ENCODE measurements at regions of chr1 and their contacts with region 1.

Region 1: DNA sequence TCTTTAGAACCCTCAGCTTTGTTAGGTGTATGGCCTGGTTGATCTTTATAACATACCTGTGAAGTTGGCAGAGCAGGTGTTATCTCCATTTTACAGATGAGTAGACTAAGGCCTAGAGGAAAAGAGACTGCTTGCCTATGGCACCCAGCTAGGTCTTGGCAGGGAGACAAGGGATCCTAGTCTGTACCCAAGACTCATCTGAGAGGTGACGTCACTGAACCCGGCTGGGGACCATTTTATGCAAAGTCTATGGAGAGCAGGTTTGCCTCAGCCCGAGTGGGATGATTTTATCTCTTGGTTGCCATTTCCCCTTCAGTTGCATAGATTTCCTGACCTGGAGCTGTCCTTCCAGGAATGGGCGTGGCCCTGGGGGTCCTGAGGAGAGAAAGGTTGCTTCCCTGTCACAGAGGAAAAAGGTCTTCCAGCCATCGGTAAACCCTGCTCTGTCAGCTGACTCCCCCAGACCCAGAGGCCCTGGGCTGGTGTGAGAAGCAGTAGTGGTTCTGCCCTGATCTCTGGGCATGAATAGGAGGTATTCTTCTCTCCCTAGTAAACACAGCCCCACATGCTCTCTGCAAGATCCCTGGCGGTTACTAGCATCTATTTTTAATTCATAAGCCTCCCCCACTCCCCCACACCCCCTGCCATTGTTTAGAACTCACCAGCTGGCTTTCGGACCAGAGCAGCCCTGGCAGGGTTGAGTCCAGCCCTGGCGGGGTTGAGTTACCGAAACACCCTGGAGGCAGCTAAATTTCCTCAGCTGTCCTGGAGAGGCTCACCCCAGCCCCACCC is 19.6 kb downstream of the TMCC2 start:
- DNase-seq: no peak
- H3K4me3 Mint-ChIP-seq: no peak overlapping the region
- H3K27ac Mint-ChIP-seq: no peak overlapping the region
- H3K4me1 Mint-ChIP-seq: no peaks in the 10 kb centered on the region
- H3K27me3 Mint-ChIP-seq: peaks cover 44% of the 10 kb centered on the region
- CTCF ChIP-seq: no peak

Region 2: DNA sequence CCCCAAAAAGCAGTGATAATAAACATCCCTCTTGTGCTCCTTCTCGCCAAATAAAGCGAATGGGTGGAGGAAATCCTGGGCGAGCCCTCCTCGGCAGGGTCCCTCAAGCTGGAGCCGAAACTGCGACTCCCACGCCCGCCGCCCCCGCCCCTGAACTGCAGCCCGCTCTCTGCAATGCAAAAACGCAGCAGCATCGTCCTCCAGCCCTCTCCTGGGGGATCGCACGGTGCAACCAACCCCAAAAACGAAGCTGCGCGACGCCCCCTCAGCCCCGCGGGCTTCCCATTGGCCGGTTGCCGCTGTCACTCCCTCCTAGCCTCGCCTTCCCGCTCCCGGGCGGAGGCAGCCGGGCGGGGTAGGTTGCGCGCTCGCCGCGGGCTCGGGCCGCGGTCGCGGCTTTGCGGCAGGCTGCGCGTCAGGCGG is 19.7 kb before region 1 on chr1 and contains the start of gene TMCC2:
- CTCF ChIA-PET with region 1: interaction called, 10 read pairs
- intact Hi-C with region 1: no loop called
- DNase-seq: peak; percentile 86
- H3K4me3 Mint-ChIP-seq: peak within 1 kb of the TSS; percentile 66
- H3K27ac Mint-ChIP-seq: peak within 1 kb of the TSS; percentile 2
- H3K4me1 Mint-ChIP-seq: peaks cover 28% of the 10 kb centered on the region
- H3K27me3 Mint-ChIP-seq: peaks cover 13% of the 10 kb centered on the region
- CTCF ChIP-seq: no peak
- total RNA-seq, gene TMCC2: 0.33 and 0.37 TPM in 2 replicates

Region 3: DNA sequence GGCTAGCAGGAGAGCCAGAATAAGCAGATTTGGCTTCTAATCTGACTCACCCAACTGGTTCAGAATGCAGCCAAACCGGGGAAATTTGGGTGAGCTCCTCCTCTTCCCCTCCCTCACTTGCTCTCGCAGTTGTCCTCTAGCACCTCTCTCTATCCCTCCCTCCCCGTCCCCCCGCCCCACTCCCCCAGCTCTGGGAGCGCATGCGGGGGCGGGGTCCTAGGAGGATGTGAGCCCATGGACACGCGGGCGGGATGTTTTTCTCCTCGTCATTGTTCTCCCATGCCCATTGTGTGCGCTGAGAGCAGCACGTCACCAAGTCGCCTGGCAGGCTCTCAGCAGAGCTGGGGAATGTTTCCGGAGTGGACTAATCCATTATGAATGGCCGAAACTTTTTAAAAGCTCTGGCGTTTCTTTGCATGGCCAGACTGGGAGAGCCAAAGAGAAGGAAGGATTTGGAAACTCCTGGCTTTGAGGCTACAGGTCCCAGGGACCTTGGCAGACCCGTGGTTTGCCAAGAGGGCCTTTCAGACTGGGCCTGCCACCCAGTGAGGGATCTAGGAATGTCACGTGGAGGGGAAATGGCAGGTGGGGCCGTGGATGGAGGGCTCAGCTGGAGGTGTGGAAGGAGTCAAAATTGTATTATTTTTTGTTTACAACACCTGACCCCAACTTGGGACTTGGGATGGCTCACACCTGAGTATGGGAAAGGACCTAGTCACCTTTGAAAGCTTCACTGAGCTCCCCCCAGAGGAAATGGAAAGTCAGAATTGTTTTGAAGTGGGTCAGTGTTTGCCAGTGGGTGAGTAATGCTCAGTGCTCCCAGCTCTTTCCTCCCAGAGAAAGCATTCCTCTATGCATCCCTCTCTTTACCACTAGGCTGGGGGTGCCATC is 296.3 kb after region 1 on chr1:
- CTCF ChIA-PET with region 1: no interaction called
- intact Hi-C with region 1: no loop called
- DNase-seq: peak; percentile 82
- H3K4me3 Mint-ChIP-seq: peak overlapping the region; percentile 63
- H3K27ac Mint-ChIP-seq: peak overlapping the region; percentile 83
- H3K4me1 Mint-ChIP-seq: peaks cover 27% of the 10 kb centered on the region
- H3K27me3 Mint-ChIP-seq: peaks cover 8% of the 10 kb centered on the region
- CTCF ChIP-seq: no peak